Astrocyte of the cerebellum (primary cell): ENCODE measurements at regions of chr3 and their contacts with region 1.

Region 1: DNA sequence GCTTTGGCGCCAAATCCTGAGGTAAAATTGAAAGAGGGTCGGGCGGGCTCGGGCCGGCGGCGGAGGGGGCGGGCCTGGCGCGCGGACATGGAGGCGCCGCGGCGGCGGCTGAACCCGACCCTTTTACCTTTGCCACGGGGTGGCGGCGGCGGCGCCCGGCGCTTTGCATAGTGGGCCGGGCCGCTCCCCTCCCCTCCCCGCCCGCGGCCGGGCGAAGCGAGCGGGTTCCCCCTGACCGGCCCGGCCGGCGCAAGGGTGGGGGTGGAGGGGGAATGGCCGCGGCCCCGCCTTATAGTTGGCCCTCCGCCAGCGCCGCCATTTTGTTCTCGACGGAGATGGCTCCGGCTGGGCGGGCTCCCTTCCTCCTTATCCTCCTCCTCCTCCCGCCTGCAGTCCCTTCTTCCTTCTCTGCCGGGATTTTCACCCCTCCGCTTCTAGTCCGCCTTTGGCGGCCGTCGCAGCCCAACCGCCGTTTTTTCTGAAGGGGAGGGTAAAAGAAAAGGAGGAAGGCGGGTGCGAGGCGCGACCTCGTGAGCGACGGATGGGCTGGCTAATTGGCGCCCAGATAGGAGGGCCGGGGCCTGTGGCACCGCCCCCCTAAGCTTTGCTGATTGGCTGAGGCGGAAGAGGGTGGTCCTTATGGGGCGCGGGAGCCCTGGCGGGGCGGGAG is 638 bp downstream of the NR2C2 start:
- DNase-seq: peak; percentile 92
- H3K4me3 ChIP-seq: peak overlapping the region; percentile 82
- CTCF ChIP-seq: no peak

Region 2: GRCh38 chr3:14651440-14652251 is 296.4 kb before region 1 on chr3 and contains the start of gene CCDC174:
- in situ Hi-C with region 1: loop called (anchors 10 kb)
- DNase-seq: peak; percentile 96
- H3K4me3 ChIP-seq: peak within 1 kb of the TSS; percentile 98
- CTCF ChIP-seq: no peak

Region 3: DNA sequence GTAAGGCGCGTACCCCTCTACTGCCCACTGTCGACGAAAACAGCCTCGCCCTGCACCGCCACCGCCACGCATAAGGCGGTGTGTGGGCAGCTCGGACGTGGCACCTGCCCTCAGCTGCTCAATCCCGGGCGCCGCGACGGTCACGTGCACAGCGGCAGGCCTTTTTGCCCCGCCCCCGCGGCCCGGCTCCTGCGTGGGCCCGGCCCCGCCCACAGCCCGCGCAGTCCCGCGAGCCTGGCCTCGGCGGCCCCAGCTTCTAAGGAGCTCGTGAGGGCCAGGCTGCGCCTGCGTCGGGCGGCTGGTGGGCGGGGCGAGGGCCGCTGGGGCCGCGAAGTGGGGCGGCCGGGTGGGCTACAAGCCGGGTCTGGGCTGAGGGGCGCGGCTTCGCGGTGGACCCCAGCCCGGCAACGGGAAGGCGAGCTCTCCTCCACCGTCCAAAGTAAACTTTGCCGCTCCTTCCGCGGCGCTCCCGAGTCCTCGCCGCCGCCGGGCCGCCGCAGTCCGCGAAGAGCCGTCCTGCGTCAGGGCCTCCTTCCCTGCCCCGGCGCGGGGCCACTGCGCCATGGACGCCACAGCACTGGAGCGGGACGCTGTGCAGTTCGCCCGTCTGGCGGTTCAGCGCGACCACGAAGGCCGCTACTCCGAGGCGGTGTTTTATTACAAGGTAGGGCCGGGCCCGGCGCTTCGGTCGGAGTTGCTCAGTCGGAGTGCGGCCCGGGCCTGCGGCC is 258.1 kb after region 1 on chr3 and contains the start of gene CAPN7:
- in situ Hi-C with region 1: loop called (anchors 25 kb)
- DNase-seq: peak; percentile 72
- H3K4me3 ChIP-seq: peak within 1 kb of the TSS; percentile 88
- CTCF ChIP-seq: peak; percentile 49